ENCODE measurements at regions of chr12 and their contacts with region 1.

Region 1: GRCh38 chr12:59149997-59150642 is 229.8 kb upstream of the LRIG3 start:
- DNase-seq: no peak
- H3K4me3 ChIP-seq: no peak overlapping the region
- H3K27ac ChIP-seq: no peak overlapping the region
- H3K4me1 ChIP-seq: no peaks in the 10 kb centered on the region
- H3K27me3 ChIP-seq: no peaks in the 10 kb centered on the region
- CTCF ChIP-seq: peak; percentile 90 to 96 (median 94)
- EP300 ChIP-seq: no peak
- POLR2A ChIP-seq: no peak

Region 2: GRCh38 chr12:58346032-58346632 is 804.0 kb before region 1 on chr12:
- intact Hi-C with region 1: loop called (anchors 10 kb)
- DNase-seq: no peak
- H3K4me3 ChIP-seq: no peak overlapping the region
- H3K27ac ChIP-seq: no peak overlapping the region
- H3K4me1 ChIP-seq: no peaks in the 10 kb centered on the region
- H3K27me3 ChIP-seq: no peaks in the 10 kb centered on the region
- CTCF ChIP-seq: peak; percentile 38 to 77 (median 61)
- EP300 ChIP-seq: no peak
- POLR2A ChIP-seq: no peak

Region 3: DNA sequence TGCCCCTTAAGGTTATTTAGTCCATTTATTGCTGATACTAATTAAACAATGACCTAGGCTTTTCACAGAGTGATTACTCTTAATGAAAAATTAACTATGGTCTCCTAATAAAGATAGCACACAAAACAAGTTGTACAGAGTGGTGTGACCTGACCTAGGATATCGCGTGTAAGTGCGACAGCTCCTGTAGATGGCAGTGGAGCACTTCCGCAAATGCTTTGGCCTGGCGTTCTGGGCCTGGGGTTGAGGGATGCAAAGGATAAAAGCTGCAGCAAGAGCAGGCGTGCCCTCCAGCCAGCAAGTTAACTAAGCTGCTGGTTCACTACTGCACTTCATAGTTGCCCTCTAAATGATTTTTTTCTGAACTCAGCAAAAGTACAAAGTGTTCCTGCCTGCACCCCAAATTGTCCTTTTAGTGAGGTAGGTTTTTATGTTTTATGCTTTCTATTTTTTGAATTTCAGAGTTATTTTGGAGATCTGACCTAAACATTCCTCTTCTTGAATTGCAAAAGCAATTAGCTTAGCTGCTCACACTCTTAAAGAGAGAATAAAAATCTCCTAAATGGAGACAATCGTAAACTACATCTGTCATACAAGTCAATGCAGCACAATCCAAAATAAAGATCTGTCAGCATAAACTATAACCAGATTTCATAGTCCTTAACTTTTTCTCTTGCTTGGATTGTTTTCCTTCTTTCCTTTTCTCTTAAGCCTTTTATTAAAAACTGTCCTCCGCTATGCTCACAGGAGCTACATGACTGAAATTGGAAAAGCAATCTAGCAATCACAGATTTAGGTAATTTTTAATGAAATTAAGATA is 609.4 kb before region 1 on chr12:
- intact Hi-C with region 1: loop called (anchors 5 kb)
- DNase-seq: peak; percentile 90
- H3K4me3 ChIP-seq: no peak overlapping the region
- H3K27ac ChIP-seq: peak overlapping the region in 3 of 4 donors; percentile 1 to 16 (median 7)
- H3K4me1 ChIP-seq: peaks cover 0 to 24% (median 15%) of the 10 kb centered on the region in 4 donors
- H3K27me3 ChIP-seq: no peaks in the 10 kb centered on the region
- CTCF ChIP-seq: peak; percentile 56 to 70 (median 65)
- EP300 ChIP-seq: no peak
- POLR2A ChIP-seq: no peak

Region 4: DNA sequence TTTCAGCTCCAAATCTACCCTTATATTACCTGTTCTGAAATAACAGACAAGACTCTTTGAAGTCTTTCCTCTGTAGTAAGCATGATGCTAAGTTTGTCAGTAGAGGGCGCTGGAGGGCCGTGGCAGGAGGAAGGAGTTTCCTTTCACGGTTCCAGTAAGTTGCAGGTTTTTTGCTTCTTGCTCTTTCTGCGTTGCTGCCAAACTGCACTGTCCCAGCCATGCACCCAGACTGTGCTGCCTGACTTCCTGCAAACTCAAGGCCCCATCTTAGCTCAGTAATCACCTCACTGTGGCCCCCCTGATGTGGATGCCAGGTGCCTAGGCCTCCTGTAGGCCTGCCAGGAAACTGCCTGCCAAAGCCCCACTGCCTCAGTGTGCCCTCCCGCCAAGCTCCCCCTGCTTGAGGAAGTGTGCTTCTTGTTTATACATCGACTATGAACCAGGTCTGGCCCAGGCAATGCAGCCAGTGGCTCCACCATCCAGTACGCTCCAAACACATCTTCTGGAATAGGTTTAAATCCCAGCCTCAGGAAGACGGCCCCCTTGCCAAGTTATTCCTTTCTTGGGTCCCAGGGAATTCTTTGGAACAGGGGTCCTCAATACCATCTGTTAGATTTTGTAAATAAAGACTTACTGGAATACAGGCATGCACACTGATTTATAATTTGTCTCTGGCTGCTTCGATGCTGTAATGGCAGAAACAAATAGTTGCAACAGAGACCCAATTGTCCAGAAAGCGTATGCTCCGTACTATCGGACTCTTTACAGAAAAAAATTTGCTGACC is 36.1 kb before region 1 on chr12:
- intact Hi-C with region 1: loop called (anchors 2 kb)
- DNase-seq: peak; percentile 84
- H3K4me3 ChIP-seq: no peak overlapping the region
- H3K27ac ChIP-seq: no peak overlapping the region
- H3K4me1 ChIP-seq: peaks cover 0 to 4% (median 2%) of the 10 kb centered on the region in 4 donors
- H3K27me3 ChIP-seq: no peaks in the 10 kb centered on the region
- CTCF ChIP-seq: peak; percentile 24 to 85 (median 60)
- EP300 ChIP-seq: no peak
- POLR2A ChIP-seq: no peak